ENCODE measurements at regions of chr17 and their contacts with region 1.

Region 1: DNA sequence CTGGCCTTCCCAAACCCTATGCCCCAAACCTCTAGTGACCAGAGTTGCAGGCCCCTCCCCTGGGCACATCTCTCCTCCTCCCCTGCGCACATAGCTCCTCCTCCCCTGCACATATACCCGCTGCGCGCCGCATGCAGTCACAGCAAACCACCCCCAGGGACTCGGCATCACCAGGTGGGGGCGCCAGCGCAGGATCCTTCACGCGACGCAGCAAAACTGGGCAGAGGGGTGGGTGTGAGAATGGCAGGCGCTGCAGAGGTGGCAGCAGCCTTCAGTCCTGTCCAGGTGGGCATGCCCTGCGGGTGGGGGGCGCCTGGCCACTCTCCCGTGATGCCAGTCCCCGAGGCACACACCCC is 5.6 kb downstream of the CORO6 start:
- DNase-seq: peak; percentile 67
- ATAC-seq: peak; percentile 81
- H3K4me3 ChIP-seq: peak overlapping the region; percentile 36 to 50
- H3K27ac ChIP-seq: peak overlapping the region; percentile 64; the same call in 1 of the 2 replicates
- H3K4me1 ChIP-seq: peaks cover 48 to 64% of the 10 kb centered on the region in 2 experiments
- H3K27me3 ChIP-seq: no peaks in the 10 kb centered on the region
- CTCF ChIP-seq: peak; percentile 62 to 91 (median 84)
- POLR2A ChIP-seq: peak; percentile 30
- RAD21 ChIP-seq: peak; percentile 39; the same call in 1 of the 2 replicates

Region 2: GRCh38 chr17:29369831-29370735 is 247.0 kb before region 1 on chr17:
- CTCF ChIA-PET with region 1: interaction called, 10 read pairs
- POLR2A ChIA-PET with region 1: no interaction called
- RAD21 ChIA-PET with region 1: no interaction called
- intact Hi-C with region 1: no loop called
- DNase-seq: peak; percentile 66
- ATAC-seq: peak; percentile 94
- H3K4me3 ChIP-seq: peak overlapping the region; percentile 0 to 27; a peak in 3 of 4 replicates
- H3K27ac ChIP-seq: peak overlapping the region; percentile 11
- H3K4me1 ChIP-seq: peaks cover 2 to 18% of the 10 kb centered on the region in 2 experiments; a peak in 3 of 4 replicates
- H3K27me3 ChIP-seq: no peaks in the 10 kb centered on the region
- CTCF ChIP-seq: peak; percentile 62 to 88 (median 68)
- POLR2A ChIP-seq: no peak
- RAD21 ChIP-seq: peak; percentile 74

Region 3: DNA sequence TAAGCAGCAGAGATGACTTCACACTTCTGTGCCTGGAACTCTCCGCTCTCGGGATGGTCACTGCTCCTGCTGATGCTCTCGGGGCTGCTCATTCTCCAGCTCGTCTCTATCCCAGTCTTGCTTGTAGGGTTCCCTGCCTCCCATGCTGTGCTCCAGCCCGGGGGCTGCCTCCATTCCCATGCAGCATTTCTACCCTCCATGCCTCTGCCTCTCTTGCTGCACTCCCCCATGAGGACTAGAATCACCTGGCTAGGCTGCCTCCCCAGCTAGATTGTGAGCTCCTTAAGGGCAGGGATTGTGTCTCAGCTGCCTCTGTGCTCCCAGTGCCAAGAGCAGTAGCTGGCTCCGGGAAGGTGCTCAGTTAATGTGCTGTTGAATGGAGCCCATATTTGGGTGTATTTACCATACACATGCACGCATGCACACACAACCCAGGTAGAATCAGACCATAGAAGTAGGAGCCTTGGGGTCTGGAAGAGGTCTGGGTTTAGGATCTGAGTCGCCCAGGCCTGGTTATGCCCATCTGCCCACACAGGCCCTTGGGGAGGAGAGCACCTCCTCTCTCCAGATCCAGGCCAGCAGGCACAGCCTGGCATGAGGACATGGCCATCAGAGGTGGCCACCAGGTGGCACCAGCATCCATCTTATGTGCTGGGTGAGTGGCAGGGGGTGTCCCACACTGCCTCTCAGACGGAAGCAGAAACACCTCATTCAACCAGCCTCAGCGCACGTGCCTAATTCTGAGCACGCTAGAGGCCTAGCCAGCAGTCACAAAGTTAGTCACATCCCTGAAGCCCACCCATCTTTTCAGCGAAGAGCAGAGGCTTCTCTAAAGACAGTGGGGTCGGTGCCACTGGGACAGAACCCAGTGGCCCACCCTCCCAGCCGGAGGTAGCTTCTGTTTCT is 37.0 kb before region 1 on chr17:
- CTCF ChIA-PET with region 1: interaction called, 10 read pairs
- POLR2A ChIA-PET with region 1: no interaction called
- RAD21 ChIA-PET with region 1: no interaction called
- intact Hi-C with region 1: loop called (anchors 1 kb)
- DNase-seq: peak; percentile 67
- ATAC-seq: peak; percentile 97
- H3K4me3 ChIP-seq: no peak overlapping the region
- H3K27ac ChIP-seq: peak overlapping the region; percentile 37
- H3K4me1 ChIP-seq: peaks cover 5 to 26% of the 10 kb centered on the region in 2 experiments; a peak in 3 of 4 replicates
- H3K27me3 ChIP-seq: no peaks in the 10 kb centered on the region
- CTCF ChIP-seq: peak; percentile 88
- POLR2A ChIP-seq: no peak
- RAD21 ChIP-seq: peak; percentile 95

Region 4: GRCh38 chr17:29589524-29590410 is 27.3 kb before region 1 on chr17 and contains the start of gene GIT1:
- CTCF ChIA-PET with region 1: interaction called, 57 read pairs
- POLR2A ChIA-PET with region 1: no interaction called
- RAD21 ChIA-PET with region 1: no interaction called
- intact Hi-C with region 1: no loop called
- DNase-seq: peak; percentile 59
- ATAC-seq: peak; percentile 55
- H3K4me3 ChIP-seq: peak within 1 kb of the TSS; percentile 86 to 96
- H3K27ac ChIP-seq: peak within 1 kb of the TSS; percentile 94
- H3K4me1 ChIP-seq: peaks cover 32 to 73% of the 10 kb centered on the region in 2 experiments
- H3K27me3 ChIP-seq: no peaks in the 10 kb centered on the region
- CTCF ChIP-seq: no peak
- POLR2A ChIP-seq: peak; percentile 23
- RAD21 ChIP-seq: no peak
- total RNA-seq, gene GIT1: 76.5 TPM

Region 5: GRCh38 chr17:29597361-29598172 is 19.5 kb before region 1 on chr17:
- CTCF ChIA-PET with region 1: interaction called, 57 read pairs
- POLR2A ChIA-PET with region 1: no interaction called
- RAD21 ChIA-PET with region 1: no interaction called
- intact Hi-C with region 1: no loop called
- DNase-seq: no peak
- ATAC-seq: no peak
- H3K4me3 ChIP-seq: no peak overlapping the region
- H3K27ac ChIP-seq: no peak overlapping the region
- H3K4me1 ChIP-seq: peaks cover 12 to 27% of the 10 kb centered on the region in 2 experiments
- H3K27me3 ChIP-seq: no peaks in the 10 kb centered on the region
- CTCF ChIP-seq: no peak
- POLR2A ChIP-seq: no peak
- RAD21 ChIP-seq: no peak

Region 6: DNA sequence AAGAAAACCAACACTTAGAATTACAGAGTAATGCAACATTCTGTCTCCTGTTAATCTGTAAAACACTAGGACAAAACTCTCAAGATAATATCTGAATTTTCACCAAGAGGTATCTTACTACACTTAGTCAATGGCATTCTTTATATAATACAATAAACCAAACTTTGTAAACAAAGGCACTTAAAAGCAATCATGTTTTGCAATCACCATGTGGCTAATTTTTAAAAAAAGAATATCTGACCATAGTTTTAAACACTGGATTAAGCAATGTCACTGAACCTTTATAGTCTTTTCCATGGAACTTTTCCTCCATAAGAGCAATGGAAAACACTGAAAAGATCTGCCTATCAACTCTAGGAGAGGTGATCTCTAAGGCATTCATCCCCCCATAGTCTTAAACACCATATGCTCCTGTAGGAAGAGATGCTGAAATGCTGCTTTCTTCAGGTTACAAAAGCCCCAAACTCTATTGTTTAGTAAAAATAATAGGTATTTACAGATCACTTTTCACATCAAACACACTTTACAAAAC is 149.8 kb after region 1 on chr17:
- CTCF ChIA-PET with region 1: no interaction called
- POLR2A ChIA-PET with region 1: no interaction called
- RAD21 ChIA-PET with region 1: no interaction called
- intact Hi-C with region 1: no loop called
- DNase-seq: no peak
- ATAC-seq: no peak
- H3K4me3 ChIP-seq: no peak overlapping the region
- H3K27ac ChIP-seq: no peak overlapping the region
- H3K4me1 ChIP-seq: no peaks in the 10 kb centered on the region
- H3K27me3 ChIP-seq: no peaks in the 10 kb centered on the region
- CTCF ChIP-seq: no peak
- POLR2A ChIP-seq: no peak
- RAD21 ChIP-seq: no peak

Region 7: GRCh38 chr17:29777663-29778062 is 160.6 kb after region 1 on chr17:
- CTCF ChIA-PET with region 1: interaction called, 18 read pairs
- POLR2A ChIA-PET with region 1: no interaction called
- RAD21 ChIA-PET with region 1: no interaction called
- intact Hi-C with region 1: no loop called
- DNase-seq: no peak
- ATAC-seq: no peak
- H3K4me3 ChIP-seq: no peak overlapping the region
- H3K27ac ChIP-seq: no peak overlapping the region
- H3K4me1 ChIP-seq: no peaks in the 10 kb centered on the region
- H3K27me3 ChIP-seq: no peaks in the 10 kb centered on the region
- CTCF ChIP-seq: no peak
- POLR2A ChIP-seq: no peak
- RAD21 ChIP-seq: no peak

Region 8: DNA sequence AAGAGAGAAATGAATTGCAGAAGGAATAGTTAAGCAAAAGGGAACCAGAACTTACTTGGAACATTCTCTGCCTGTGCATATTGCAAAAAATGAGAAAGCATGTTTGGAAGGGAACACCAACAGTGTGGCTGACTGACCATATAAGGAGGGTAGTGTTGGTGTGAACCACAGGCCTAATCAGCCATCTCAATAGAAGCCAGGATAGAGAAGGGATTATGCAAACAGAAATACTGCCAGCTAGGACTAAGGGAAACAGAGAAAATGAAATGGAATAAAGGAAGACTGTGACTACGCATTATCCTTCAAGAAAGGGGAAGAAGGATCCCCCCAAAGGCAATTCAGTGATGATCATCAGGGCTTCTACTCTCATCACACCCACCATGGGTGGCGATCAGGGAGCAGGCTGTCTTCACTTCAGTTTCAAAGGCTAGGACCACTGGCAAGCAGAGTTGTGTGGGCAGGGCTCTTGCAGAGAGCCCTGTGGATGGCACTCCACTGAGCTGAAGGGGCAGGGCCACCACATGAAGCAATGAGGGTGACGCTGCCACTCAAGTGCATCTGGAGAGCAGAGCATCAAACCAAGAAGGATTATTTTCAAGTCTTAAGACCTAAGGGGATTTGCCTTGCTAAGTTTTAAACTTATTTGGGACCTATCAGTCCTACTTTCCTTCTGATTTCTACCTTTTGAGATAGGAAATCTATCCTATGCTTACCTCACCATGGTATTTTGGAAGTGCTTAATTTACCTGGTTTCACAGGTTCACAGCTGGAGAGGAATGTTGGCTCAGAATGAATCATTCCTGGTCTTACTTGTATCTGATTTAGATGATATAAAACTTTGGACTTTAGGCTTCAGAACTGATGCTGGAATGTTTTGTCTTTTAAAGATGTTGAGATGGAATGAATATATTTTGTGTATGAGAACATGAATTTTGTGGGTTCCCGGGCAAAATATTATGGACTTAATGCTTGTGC is 172.4 kb after region 1 on chr17:
- CTCF ChIA-PET with region 1: interaction called, 10 read pairs
- POLR2A ChIA-PET with region 1: no interaction called
- RAD21 ChIA-PET with region 1: no interaction called
- intact Hi-C with region 1: no loop called
- DNase-seq: no peak
- ATAC-seq: no peak
- H3K4me3 ChIP-seq: no peak overlapping the region
- H3K27ac ChIP-seq: no peak overlapping the region
- H3K4me1 ChIP-seq: peaks cover 10 to 19% of the 10 kb centered on the region in 2 experiments
- H3K27me3 ChIP-seq: no peaks in the 10 kb centered on the region
- CTCF ChIP-seq: no peak
- POLR2A ChIP-seq: no peak
- RAD21 ChIP-seq: no peak

Measured in HCT116 (cell line).